SK-N-SH (cell line): ENCODE measurements at regions of chr2 and their contacts with region 1.

Region 1: DNA sequence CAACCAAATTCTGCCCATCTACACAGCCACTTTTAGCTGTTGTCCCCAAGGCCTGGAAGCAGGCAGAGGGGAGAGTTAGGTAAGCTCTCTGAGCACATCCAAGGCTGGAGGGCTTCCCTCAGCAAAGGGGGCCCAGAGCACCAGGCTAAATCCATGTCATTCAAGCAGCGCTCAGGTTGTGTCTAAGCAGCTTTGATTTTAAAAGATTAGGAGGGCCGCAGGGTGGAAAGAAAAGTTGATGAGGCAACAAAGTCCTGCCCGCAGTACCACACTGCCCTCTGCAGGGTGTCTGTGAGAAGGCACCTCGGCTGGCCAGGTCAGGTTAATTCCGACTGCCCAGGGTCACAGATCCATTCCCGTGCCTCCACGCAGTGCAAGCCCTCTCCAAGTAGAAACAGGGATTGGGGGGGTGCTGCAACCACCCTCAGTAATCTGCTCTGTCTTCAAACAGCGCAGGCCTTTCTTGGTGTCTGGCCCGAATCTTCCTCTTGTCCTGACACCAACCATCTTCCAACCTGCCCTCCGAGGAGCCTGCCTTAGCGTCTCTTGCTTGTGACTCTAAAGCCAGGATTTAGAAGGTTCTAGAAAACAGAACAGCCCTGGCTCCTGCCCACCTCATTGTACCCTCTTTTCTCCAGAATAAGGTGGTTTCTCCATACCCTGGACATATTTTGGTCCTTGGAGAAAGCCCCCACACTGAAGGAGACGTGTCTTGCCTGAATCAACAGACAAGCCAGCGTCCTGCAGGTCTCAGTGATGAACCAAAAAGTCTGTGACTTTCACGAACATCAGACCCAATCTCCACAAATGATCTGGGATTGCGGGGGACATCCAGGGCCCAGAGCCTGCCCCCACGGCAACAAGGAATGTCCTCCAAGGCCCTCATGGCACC is 289.2 kb downstream of the TNS1 start:
- DNase-seq: peak; percentile 79
- H3K4me3 ChIP-seq: peak overlapping the region in 1 of 2 experiments; percentile 14; a peak in 1 of 4 replicates
- H3K27ac ChIP-seq: peak overlapping the region; percentile 22 to 46; a peak in 2 of 4 replicates
- H3K4me1 ChIP-seq: peaks cover 26 to 28% of the 10 kb centered on the region in 2 experiments; a peak in 3 of 4 replicates
- H3K27me3 ChIP-seq: no peaks in the 10 kb centered on the region
- CTCF ChIP-seq: peak; percentile 96
- EP300 ChIP-seq: peak in 1 of 2 experiments; percentile 32; a peak in 1 of 4 replicates
- RAD21 ChIP-seq: peak; percentile 98

Region 2: GRCh38 chr2:216687646-216688045 is 1026.0 kb before region 1 on chr2:
- CTCF ChIA-PET with region 1: interaction called, 37 read pairs
- POLR2A ChIA-PET with region 1: interaction called, 4 read pairs
- DNase-seq: no peak
- H3K4me3 ChIP-seq: no peak overlapping the region; a peak in 1 of 4 replicates
- H3K27ac ChIP-seq: no peak overlapping the region
- H3K4me1 ChIP-seq: peaks cover 12 to 29% of the 10 kb centered on the region in 2 experiments; a peak in 3 of 4 replicates
- H3K27me3 ChIP-seq: no peaks in the 10 kb centered on the region
- CTCF ChIP-seq: peak; percentile 53
- EP300 ChIP-seq: no peak
- RAD21 ChIP-seq: no peak

Region 3: GRCh38 chr2:216698895-216699294 is 1014.7 kb before region 1 on chr2:
- CTCF ChIA-PET with region 1: interaction called, 58 read pairs
- POLR2A ChIA-PET with region 1: interaction called, 4 read pairs
- DNase-seq: peak; percentile 55
- H3K4me3 ChIP-seq: no peak overlapping the region
- H3K27ac ChIP-seq: peak overlapping the region in 1 of 2 experiments; percentile 98; a peak in 2 of 4 replicates
- H3K4me1 ChIP-seq: peaks cover 44 to 55% of the 10 kb centered on the region in 2 experiments
- H3K27me3 ChIP-seq: no peaks in the 10 kb centered on the region
- CTCF ChIP-seq: peak; percentile 77
- EP300 ChIP-seq: peak in 1 of 2 experiments; percentile 34; a peak in 1 of 4 replicates
- RAD21 ChIP-seq: peak; percentile 99

Region 4: GRCh38 chr2:217695033-217695520 is 18.6 kb before region 1 on chr2:
- CTCF ChIA-PET with region 1: interaction called, 11 read pairs
- POLR2A ChIA-PET with region 1: no interaction called
- DNase-seq: no peak
- H3K4me3 ChIP-seq: 0 out of 4 replicates have a peak overlapping the region, but pooled peaks of 1 of the 2 experiments have one; percentile 3
- H3K27ac ChIP-seq: peak overlapping the region in 1 of 2 experiments; percentile 57; a peak in 2 of 4 replicates
- H3K4me1 ChIP-seq: 0 out of 4 replicates have a peak, but pooled peaks cover 0 to 4% of the 10 kb centered on the region in 2 experiments
- H3K27me3 ChIP-seq: no peaks in the 10 kb centered on the region
- CTCF ChIP-seq: no peak
- EP300 ChIP-seq: no peak
- RAD21 ChIP-seq: no peak

Region 5: GRCh38 chr2:217756375-217757107 is 42.9 kb after region 1 on chr2:
- CTCF ChIA-PET with region 1: interaction called, 13 read pairs
- POLR2A ChIA-PET with region 1: no interaction called
- DNase-seq: peak; percentile 93
- H3K4me3 ChIP-seq: no peak overlapping the region
- H3K27ac ChIP-seq: no peak overlapping the region
- H3K4me1 ChIP-seq: peaks cover 5 to 6% of the 10 kb centered on the region in 2 experiments; a peak in 2 of 4 replicates
- H3K27me3 ChIP-seq: no peaks in the 10 kb centered on the region
- CTCF ChIP-seq: peak; percentile 82
- EP300 ChIP-seq: no peak
- RAD21 ChIP-seq: peak; percentile 79